Right cardiac atrium (tissue), 5 donors: ENCODE measurements at regions of chr17 and their contacts with region 1.

Region 1: GRCh38 chr17:9104370-9105041 is 83.2 kb downstream of the NTN1 start:
- DNase-seq: peak; percentile 82 to 91 (median 91)
- ATAC-seq: peak; percentile 93 to 95
- H3K4me3 ChIP-seq: no peak overlapping the region
- H3K27ac ChIP-seq: peak overlapping the region; percentile 94
- H3K4me1 ChIP-seq: peaks cover 5% of the 10 kb centered on the region
- H3K27me3 ChIP-seq: no peaks in the 10 kb centered on the region

Region 2: DNA sequence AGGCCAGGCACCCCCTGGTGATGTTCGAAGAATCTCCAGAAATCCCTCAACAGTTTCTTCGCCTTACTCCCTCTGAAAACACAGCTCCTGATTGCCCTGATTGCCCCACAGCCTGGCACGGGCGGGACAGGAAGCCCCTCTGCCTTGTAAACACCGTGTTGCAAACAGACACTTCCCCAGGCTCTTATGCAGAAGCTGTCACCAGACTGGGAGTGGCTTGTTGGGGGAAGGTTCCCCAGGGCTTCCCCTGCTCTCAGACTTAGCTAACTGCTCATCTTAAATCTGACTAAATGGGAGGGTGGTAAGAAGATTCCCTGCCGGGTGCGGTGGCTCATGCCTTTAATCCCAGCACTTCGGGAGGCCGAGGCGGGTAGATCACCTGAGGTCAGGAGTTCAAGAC is 150.2 kb before region 1 on chr17:
- intact Hi-C with region 1: no loop called
- DNase-seq: peak; percentile 49 to 85 (median 80)
- ATAC-seq: peak; percentile 71 to 78
- H3K4me3 ChIP-seq: no peak overlapping the region
- H3K27ac ChIP-seq: no peak overlapping the region
- H3K4me1 ChIP-seq: no peaks in the 10 kb centered on the region
- H3K27me3 ChIP-seq: no peaks in the 10 kb centered on the region

Region 3: DNA sequence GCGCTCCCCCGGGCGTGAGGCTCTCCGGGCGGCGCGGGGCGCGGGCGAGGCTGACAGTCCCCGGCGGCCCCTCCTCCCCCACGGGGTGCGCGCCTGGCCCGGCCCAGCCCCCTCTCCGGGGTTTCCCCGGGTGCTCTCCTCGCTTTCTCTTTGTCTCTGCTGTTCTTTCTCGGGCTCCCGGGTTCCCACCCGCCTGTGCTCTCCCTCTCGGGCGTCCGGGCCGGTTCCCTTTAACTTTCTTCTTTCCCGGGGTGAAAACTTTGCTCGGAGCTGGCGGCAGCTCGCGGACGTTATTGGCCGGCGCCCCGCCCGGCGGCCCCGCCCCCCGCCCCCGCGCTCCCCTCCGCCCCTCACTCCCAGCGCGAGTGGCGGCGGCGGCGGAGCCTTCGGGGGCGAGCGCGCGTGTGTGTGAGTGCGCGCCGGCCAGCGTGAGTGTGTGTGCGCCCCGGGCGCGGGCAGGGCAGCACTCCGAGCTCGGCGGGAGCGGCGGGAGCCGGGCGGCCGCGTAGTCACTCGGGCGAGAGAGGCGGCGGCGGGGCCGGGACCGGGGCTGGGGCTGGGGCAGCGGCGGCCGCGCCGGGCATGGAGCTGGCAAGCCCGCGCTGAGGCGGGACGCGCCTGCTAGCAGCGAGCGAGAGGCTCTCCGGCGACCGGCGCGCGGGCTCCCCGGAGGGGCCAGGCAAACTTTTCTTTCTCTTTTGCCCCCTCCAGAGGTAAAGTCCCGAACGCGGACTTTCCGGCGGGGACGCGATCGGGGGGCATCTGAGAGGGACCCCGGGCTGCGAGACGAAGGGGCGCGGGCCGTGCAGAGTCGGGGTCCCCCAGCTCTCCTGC is 83.1 kb before region 1 on chr17 and contains the start of gene NTN1:
- intact Hi-C with region 1: loop called in 1 of 4 experiments (anchors 5 kb)
- DNase-seq: peak; percentile 66 to 87 (median 87)
- ATAC-seq: peak; percentile 72 to 78
- H3K4me3 ChIP-seq: peak within 1 kb of the TSS; percentile 87
- H3K27ac ChIP-seq: peak within 1 kb of the TSS; percentile 55
- H3K4me1 ChIP-seq: no peaks in the 10 kb centered on the region
- H3K27me3 ChIP-seq: no peaks in the 10 kb centered on the region
- total RNA-seq, gene NTN1: 140 to 265 (median 184) TPM

Region 4: GRCh38 chr17:9056566-9056965 is 47.9 kb before region 1 on chr17:
- intact Hi-C with region 1: no loop called
- DNase-seq: peak in 2 of 3 donors; percentile 29 to 54
- ATAC-seq: peak; percentile 17 to 62
- H3K4me3 ChIP-seq: no peak overlapping the region
- H3K27ac ChIP-seq: no peak overlapping the region
- H3K4me1 ChIP-seq: peaks cover 4% of the 10 kb centered on the region
- H3K27me3 ChIP-seq: no peaks in the 10 kb centered on the region

Region 5: DNA sequence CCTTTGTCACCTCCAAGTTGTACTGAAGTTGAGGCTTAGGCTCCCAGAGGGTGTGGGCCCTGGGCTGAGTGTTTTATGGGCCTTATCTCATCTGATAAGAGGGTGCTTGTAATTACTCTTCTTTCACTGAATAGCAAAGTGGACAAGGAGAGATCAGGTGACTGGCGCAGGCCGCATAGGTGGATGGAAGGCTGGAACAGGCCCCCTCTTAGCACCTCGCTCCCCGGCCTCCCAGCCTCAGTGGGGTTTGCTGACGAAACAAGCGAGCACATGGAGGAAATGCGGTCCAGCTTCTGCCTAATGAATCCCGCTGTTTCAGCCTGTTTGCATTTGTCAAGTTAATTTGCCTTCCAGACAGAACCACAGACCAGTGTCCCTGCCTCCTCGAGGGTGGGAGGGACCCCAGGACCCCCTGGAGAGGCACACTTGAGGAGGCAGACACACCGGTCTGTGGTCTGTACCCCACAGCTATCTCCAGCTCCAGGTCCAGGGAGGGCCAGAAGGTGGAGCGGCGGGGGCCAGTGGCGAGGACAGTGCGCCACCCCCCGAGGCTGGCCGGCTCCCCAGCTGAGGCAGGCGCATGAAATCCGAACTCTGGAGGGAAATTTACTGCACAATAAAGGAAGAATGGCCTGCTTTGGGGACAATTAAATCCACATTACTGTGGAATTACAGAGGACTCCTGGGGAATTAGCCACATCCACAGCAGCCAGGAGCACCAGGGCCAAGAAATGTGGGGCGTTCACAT is 40.2 kb after region 1 on chr17:
- intact Hi-C with region 1: loop called in 1 of 4 experiments (anchors 5 kb)
- DNase-seq: no peak
- ATAC-seq: no peak
- H3K4me3 ChIP-seq: no peak overlapping the region
- H3K27ac ChIP-seq: no peak overlapping the region
- H3K4me1 ChIP-seq: no peaks in the 10 kb centered on the region
- H3K27me3 ChIP-seq: no peaks in the 10 kb centered on the region

Region 6: GRCh38 chr17:9162275-9162985 is 57.9 kb after region 1 on chr17:
- intact Hi-C with region 1: no loop called
- DNase-seq: peak in 1 of 3 donors; percentile 68
- ATAC-seq: peak in 1 of 2 donors; percentile 58
- H3K4me3 ChIP-seq: no peak overlapping the region
- H3K27ac ChIP-seq: no peak overlapping the region
- H3K4me1 ChIP-seq: no peaks in the 10 kb centered on the region
- H3K27me3 ChIP-seq: no peaks in the 10 kb centered on the region